ENCODE measurements at regions of chr22 and their contacts with region 1.

Region 1: DNA sequence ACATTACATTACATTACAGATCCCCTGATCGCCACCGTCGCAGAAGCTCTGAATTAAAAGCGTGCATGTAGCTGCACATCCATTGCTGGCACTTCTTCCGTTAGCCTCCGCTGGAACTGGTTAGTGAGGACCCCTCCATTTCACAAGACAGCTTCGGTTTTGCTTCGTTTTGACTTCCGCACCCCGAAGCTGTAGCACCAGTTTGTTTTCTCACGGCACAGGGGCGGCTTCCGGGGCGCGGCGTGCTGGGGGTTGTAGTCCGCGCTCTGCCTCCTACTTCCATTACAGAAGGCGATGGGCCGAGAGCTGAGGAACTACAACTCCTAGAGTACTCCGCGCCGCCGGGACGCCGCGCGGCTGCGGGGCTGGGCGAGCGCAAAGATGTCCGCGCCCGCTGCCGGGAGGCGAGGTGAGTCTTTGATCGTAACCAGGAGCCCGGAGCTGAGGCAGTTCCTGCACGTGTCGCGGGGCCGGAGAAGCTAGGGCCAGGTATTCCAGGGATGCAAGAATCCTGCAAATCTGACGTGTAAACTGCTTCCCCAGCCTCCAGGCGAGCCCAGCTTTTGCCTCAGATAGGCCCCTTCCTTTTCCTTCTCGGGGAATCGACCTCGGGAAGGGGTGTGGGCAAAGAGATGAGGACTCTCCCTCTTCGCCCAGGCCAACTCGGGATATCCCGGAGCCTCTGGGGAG is at the start of gene PEX26:
- DNase-seq: peak; percentile 97
- H3K4me3 ChIP-seq: peak within 1 kb of the TSS; percentile 93
- H3K27ac ChIP-seq: peak within 1 kb of the TSS; percentile 84
- H3K4me1 ChIP-seq: peaks cover 14% of the 10 kb centered on the region
- H3K27me3 ChIP-seq: no peaks in the 10 kb centered on the region
- CTCF ChIP-seq: no peak
- total RNA-seq, gene PEX26: 86.7 to 128 TPM

Region 2: DNA sequence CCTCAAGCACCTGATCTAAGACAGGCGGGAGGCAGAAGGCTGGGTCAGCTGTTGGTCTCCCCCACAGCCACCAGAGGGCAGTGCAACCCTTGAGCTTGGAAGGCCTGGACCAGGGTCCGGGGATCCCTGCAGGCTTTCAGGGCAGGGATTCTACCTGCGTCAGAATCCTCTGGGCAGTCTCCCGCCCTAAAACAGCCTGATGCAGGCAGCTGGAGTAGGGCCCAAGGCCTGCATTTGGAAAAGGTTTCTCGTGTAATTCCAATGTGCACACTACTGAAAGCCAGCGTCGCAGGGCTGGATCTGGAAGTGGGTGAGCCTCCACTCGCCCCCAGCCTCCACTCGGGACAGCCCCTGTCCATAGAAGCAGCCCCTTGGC is 335.3 kb before region 1 on chr22:
- intact Hi-C with region 1: loop called (anchors 10 kb)
- DNase-seq: peak; percentile 74
- H3K4me3 ChIP-seq: no peak overlapping the region
- H3K27ac ChIP-seq: no peak overlapping the region
- H3K4me1 ChIP-seq: no peaks in the 10 kb centered on the region
- H3K27me3 ChIP-seq: no peaks in the 10 kb centered on the region
- CTCF ChIP-seq: peak; percentile 78

Region 3: DNA sequence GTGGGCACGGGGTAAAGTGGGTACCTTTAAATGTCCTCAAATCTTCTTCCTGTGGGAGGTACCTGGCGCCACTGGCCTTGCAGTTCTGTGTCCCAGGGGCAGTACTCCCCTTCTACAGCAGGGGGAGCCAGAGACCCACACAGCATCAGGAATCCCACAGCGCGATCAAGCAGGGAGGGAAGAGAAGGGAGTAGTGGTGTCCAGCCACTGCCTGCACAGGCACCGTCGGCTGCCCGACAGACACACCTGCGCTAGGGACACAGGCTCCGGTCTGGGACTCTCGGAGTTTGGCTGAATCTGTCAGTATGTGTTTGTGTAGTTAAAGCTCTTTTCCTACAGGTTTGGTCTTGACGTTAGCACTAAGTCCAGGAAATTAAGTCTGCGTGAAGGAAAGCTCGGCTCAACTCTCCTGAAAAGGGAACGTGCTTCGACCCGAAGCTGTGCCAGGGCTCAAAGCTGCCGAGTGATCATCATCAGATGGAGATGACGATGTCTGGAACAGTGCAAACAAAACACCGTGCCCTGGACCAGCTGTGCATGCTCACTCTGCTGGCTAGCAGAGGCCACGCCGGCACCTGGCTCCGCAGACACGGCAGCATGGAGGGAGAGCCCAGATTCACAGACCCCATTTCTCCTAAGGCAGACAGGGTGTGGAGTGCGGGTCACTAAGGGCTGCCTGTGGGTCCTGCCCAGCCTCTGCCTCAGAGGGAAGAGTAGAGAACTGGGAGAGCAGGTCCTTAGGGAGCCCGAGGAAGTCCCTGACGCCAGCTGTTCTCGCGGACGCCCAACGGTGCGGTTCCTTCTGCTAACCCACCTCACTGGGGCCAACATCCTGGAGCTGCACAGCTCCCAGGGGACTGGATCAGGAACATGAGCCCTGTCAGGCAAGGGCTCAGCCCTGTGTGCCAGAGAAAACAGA is 247.5 kb before region 1 on chr22:
- intact Hi-C with region 1: loop called (anchors 2 kb)
- DNase-seq: peak; percentile 93
- H3K4me3 ChIP-seq: no peak overlapping the region
- H3K27ac ChIP-seq: peak overlapping the region; percentile 1
- H3K4me1 ChIP-seq: peaks cover 12% of the 10 kb centered on the region
- H3K27me3 ChIP-seq: no peaks in the 10 kb centered on the region
- CTCF ChIP-seq: peak; percentile 98

Region 4: GRCh38 chr22:17903564-17904295 is 174.1 kb before region 1 on chr22:
- intact Hi-C with region 1: loop called (anchors 10 kb)
- DNase-seq: no peak
- H3K4me3 ChIP-seq: no peak overlapping the region
- H3K27ac ChIP-seq: no peak overlapping the region
- H3K4me1 ChIP-seq: no peaks in the 10 kb centered on the region
- H3K27me3 ChIP-seq: no peaks in the 10 kb centered on the region
- CTCF ChIP-seq: no peak

Region 5: DNA sequence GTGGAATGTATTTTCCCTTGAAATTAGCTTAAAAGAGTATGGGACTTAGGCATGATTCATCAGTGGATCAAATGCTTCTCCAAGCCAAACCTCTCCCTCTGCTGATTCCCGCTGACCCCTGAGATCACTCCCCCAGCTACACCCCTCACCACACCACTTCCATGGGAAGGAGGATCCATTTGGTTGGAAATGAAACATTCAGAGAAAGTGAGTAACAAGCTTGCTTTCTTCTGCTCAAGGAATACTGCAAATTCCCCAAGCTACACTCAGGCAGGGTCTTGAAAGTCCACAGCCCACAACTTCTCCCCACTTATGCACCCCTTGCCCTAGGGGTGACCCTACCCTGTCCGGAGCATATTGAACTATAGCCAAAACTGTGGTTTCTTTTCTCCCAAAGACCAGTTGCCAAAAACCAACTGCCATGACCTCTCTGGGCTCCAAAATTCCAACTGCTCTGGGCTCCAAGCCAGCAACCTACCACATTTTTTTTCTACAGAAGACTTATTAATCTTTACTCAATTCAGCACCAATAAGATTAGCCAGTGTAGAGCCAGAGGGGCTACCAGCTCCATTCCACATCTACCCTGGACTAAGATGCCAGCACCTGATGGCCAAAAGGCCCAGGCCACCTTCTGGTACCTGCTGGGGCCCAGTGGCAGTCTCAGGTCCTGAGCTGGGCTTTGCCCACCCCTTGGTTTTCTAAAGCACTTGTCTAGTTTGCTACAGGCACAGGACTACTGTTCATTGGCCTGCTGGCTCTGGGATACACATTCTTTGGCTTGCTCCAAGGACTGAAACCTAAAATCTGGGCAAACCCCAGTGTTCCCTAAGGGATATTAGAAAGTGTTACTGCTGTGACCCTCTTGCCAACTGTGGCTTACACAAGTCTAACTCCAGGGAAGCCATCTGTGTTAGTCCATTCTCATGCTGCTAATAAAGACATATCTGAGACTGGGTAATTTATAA is 154.6 kb before region 1 on chr22:
- intact Hi-C with region 1: no loop called
- DNase-seq: no peak
- H3K4me3 ChIP-seq: no peak overlapping the region
- H3K27ac ChIP-seq: no peak overlapping the region
- H3K4me1 ChIP-seq: peaks cover 9% of the 10 kb centered on the region
- H3K27me3 ChIP-seq: no peaks in the 10 kb centered on the region
- CTCF ChIP-seq: no peak

Region 6: GRCh38 chr22:18001040-18001893 is 76.5 kb before region 1 on chr22:
- intact Hi-C with region 1: loop called (anchors 2 kb)
- DNase-seq: peak; percentile 92
- H3K4me3 ChIP-seq: peak overlapping the region; percentile 83
- H3K27ac ChIP-seq: peak overlapping the region; percentile 93
- H3K4me1 ChIP-seq: peaks cover 9% of the 10 kb centered on the region
- H3K27me3 ChIP-seq: no peaks in the 10 kb centered on the region
- CTCF ChIP-seq: no peak

Region 7: DNA sequence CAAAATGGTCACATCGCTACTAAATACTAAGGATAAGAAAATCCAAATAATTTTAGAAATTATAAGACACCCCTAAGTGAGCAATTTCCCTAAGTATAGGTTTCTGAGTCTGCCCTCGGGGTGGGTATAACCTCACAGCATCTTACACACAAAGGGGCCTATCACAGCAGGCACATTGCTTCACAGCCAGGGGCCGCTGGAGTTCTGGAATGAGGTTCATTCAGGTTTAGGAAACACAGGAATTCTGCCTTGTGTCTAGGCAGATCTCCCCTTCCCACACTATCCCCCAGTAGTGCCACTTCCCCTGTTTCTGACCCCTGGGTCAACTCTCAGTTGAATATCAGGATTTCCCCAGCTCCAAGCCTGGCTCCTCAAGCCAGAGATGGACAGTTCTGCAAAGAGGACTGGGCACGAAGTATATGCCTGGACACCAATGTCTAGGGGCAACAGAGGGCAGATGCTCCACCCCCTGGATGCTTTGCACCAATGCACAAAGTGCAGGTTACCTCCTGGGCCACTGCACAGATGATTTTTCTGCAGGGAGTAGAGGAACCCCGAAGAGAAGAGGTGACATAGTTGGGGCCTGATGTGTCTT is 44.3 kb after region 1 on chr22:
- intact Hi-C with region 1: no loop called
- DNase-seq: no peak
- H3K4me3 ChIP-seq: no peak overlapping the region
- H3K27ac ChIP-seq: no peak overlapping the region
- H3K4me1 ChIP-seq: no peaks in the 10 kb centered on the region
- H3K27me3 ChIP-seq: no peaks in the 10 kb centered on the region
- CTCF ChIP-seq: no peak

Region 8: DNA sequence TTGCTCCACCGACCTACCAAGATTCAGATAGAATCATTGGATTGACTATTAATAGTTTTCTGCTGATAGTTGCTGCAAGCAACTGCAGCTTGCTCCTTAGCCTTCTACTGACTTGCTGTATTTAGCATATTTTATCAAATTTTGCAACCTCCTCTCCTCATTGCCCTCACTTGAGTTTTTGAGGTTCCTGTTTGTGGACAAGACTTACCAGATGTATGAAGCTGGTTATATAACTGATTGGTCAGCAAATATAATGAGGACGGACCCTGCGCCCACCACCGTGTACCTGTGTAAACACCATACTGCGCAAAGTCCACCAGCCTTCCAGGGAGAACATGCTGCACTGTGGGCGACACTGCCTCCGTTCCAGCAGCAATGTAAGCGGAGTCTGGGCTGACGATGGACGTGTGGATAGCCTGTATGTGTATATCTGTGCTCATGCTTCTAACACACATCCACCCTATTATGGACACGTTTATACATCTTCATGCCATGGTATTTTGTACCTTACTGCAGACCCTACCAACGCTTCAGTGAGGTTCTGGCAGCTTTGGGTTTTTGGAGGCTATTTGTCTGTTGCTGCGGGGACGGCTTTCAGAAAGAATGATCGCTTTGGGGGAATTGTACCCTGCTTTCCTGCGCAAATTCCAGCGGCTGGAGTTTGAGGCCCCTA is 70.6 kb after region 1 on chr22:
- intact Hi-C with region 1: loop called (anchors 5 kb)
- DNase-seq: no peak
- H3K4me3 ChIP-seq: no peak overlapping the region
- H3K27ac ChIP-seq: no peak overlapping the region
- H3K4me1 ChIP-seq: peaks cover 7% of the 10 kb centered on the region
- H3K27me3 ChIP-seq: no peaks in the 10 kb centered on the region
- CTCF ChIP-seq: no peak